ENCODE measurements at regions of chr10 and their contacts with region 1.

Region 1: DNA sequence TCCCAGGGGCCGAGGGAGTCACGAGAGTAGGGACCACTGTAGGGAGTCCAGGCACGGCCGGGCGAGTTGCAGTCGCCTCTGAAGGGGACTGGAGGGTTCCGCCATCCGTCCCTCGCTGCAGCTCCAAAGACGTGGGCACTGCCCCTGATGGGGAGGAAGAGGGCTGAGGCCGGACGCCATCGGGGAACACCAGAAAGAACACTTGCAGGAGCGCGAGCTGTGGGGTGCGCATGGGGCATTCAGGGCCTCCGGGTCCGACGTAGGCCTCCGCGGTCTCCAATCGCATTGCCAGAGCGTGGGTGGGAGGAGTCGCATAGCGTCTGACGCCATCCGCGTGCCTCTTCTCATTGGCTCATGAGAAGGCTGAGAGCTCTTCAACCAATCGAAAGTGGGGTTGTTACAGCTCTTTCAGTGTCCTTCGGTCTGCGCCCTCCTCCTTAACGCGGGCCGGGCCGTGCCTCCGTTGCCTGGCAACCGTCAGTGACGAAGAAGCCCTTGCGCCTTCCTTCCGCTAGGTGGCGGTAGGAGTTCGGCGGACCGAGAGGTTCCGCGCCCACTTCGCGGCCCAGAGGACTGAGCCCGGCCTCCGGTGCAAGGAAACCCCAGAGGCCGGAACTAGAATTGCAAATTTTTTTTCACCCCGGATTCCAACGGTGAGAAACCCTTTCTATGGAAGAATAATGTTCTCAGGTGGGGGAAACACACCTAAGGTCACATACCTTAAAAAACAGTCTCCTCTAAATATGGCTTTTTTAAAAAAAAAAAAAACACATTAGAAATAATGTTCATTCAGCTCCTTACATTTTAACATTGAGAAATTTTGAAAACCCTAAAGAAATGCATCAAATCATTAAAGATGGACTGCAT is at the start of gene TCTN3:
- DNase-seq: peak; percentile 97
- ATAC-seq: peak; percentile 100
- H3K4me3 Mint-ChIP-seq: peak within 1 kb of the TSS; percentile 99
- H3K27ac Mint-ChIP-seq: peak within 1 kb of the TSS; percentile 97
- H3K4me1 Mint-ChIP-seq: peaks cover 17% of the 10 kb centered on the region
- H3K27me3 Mint-ChIP-seq: peaks cover 7% of the 10 kb centered on the region
- CTCF ChIP-seq: peak; percentile 99
- total RNA-seq, gene TCTN3: 26.4 to 33.5 TPM (median 29.3 TPM) in 3 replicates

Region 2: GRCh38 chr10:95478935-95479334 is 215.0 kb before region 1 on chr10:
- CTCF ChIA-PET with region 1: interaction called, 11 read pairs
- POLR2A ChIA-PET with region 1: no interaction called
- DNase-seq: no peak
- ATAC-seq: no peak
- H3K4me3 Mint-ChIP-seq: no peak overlapping the region
- H3K27ac Mint-ChIP-seq: no peak overlapping the region
- H3K4me1 Mint-ChIP-seq: peaks cover 69% of the 10 kb centered on the region
- H3K27me3 Mint-ChIP-seq: no peaks in the 10 kb centered on the region
- CTCF ChIP-seq: no peak

Region 3: DNA sequence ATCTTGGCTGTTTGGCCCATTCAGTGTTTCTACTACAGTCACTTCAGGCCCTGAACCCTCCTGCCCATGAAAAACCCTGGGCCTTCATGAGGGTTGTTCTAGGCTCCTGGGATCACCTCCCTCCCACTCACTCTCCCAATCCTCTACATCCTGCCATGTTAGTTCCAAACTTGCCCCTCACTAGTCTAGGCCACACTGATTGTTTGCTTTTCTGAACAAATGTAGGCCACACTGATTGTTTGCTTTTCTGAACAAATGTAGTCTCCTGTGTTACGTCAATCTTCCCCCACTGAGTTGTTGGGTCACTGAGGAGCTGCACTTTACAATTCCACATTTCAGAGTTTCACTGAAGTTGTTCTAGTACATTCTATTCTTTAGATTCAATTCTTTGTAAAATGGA is 32.1 kb before region 1 on chr10:
- CTCF ChIA-PET with region 1: interaction called, 24 read pairs
- POLR2A ChIA-PET with region 1: no interaction called
- DNase-seq: no peak
- ATAC-seq: no peak
- H3K4me3 Mint-ChIP-seq: no peak overlapping the region
- H3K27ac Mint-ChIP-seq: peak overlapping the region; percentile 79
- H3K4me1 Mint-ChIP-seq: no peaks in the 10 kb centered on the region
- H3K27me3 Mint-ChIP-seq: peaks cover 3% of the 10 kb centered on the region
- CTCF ChIP-seq: no peak

Region 4: GRCh38 chr10:95716466-95717224 is 22.7 kb after region 1 on chr10:
- CTCF ChIA-PET with region 1: interaction called, 33 read pairs
- POLR2A ChIA-PET with region 1: no interaction called
- DNase-seq: no peak
- ATAC-seq: no peak
- H3K4me3 Mint-ChIP-seq: no peak overlapping the region
- H3K27ac Mint-ChIP-seq: no peak overlapping the region
- H3K4me1 Mint-ChIP-seq: peaks cover 10% of the 10 kb centered on the region; the same call in 1 of the 2 replicates
- H3K27me3 Mint-ChIP-seq: no peaks in the 10 kb centered on the region
- CTCF ChIP-seq: no peak

Region 5: DNA sequence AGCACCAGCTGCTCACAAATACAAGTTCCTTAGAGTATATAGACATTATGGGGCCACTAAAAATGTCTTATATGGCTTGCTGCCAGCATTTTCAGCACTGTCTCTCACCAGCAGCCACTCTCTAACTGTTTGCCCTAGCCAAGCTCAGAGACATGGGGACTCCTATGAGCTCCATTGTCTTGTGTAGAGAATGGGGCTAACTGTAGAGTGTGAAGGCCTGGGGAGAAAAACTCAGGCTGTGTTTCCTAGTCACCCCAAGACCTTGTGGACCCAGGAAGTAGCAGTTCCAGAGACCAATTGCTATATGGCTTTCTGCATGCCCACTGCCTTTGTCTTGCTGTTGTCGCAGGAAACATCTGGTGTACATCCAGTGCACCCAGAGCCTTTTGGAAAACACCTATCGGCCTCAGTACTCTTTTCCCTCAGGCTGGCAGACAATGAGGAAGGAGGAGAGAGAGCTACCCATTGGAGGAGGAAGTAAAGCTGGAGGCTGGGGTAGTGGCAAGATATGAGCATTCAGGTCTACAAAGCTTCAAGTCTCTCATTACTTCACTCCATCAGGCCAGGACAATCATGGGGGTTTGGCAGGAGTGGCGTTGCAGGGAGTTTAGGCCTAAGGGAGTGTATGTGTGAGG is 90.5 kb after region 1 on chr10:
- CTCF ChIA-PET with region 1: interaction called, 23 read pairs
- POLR2A ChIA-PET with region 1: no interaction called
- DNase-seq: no peak
- ATAC-seq: no peak
- H3K4me3 Mint-ChIP-seq: no peak overlapping the region
- H3K27ac Mint-ChIP-seq: no peak overlapping the region
- H3K4me1 Mint-ChIP-seq: no peaks in the 10 kb centered on the region
- H3K27me3 Mint-ChIP-seq: peaks cover 3% of the 10 kb centered on the region; the same call in 1 of the 2 replicates
- CTCF ChIP-seq: no peak

Region 6: DNA sequence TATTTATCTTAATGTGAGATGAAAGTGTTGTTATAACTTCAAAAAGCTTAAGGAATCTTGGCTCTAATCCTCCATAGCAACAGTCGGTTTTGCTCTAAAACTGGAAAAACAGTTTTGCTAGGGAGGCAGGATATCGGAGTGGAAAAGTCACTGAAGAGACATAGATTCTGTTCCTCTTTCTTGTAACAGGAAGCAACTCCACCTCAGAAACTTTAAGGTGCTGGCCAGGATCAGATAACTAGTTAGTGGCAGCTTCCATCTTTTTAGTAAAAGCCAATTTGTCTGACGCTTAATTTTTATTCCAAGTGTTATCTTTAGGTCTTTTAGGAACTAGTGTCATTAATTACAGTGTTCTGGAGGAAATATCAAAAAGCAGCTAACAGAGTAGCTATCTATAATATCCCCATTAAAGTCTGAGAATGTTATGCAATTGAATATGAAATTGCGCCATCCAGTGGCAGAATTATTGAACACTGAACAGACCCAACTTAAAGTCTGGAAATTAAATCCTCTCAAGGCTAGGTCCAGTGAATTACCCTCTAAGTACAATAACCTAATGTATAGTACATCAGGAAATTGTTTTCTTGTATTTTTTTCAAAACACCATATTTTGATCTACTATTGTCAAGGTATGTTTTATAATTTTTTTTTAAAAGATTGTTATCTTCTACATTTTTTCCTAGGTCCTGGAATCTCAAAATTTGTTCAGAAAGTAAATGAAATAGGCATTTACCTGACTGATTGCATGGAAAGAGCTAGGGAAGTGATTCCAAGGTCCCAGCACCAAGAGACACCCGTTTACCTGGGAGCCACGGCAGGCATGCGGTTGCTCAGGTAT is 148.0 kb after region 1 on chr10:
- CTCF ChIA-PET with region 1: interaction called, 221 read pairs
- POLR2A ChIA-PET with region 1: interaction called, 7 read pairs
- DNase-seq: peak; percentile 23
- ATAC-seq: peak; percentile 51; the same call in 1 of the 2 replicates
- H3K4me3 Mint-ChIP-seq: no peak overlapping the region
- H3K27ac Mint-ChIP-seq: no peak overlapping the region
- H3K4me1 Mint-ChIP-seq: peaks cover 8% of the 10 kb centered on the region
- H3K27me3 Mint-ChIP-seq: no peaks in the 10 kb centered on the region
- CTCF ChIP-seq: peak; percentile 68

Region 7: DNA sequence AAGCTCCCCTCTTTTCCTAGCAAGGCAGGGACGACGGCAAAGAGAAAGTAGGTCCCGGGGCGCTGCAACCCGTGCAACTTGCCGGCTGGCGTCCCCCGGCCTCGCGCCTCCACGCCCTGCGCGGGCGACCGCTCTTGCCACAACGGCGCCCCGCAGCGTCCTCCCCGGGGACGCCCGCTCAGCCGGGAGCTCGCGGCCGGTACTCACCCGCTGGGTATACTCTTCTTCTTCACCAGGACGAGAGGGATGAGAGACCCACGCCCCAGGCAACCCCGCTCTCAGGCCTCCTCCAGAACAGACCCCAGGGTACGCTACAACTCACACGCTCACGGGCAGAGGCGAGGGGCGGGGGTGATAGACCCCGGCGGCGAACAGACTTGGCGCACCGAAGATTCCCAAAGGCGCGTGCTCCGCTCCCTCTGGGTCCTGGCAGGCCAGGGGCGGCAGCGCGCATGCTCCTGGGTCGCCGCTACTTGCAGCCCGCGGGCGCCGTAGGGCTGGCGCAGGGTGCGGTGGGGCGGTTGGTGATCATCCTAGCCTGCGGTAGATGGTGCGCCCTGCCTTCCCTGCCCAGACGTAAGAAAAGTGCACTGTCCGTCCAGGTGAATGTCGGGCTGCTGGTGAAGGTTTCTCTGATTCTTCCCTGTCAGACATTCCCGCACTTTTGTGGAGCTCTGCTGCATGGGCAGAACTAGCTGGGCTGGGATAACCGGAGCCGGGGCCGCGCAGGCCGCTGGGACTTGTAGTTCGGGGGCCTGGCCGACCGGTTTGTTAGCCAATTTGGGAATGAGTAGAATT is 213.8 kb after region 1 on chr10 and contains the start of gene CC2D2B:
- CTCF ChIA-PET with region 1: interaction called, 17 read pairs
- POLR2A ChIA-PET with region 1: no interaction called
- DNase-seq: peak; percentile 85
- ATAC-seq: peak; percentile 96
- H3K4me3 Mint-ChIP-seq: peak within 1 kb of the TSS; percentile 88
- H3K27ac Mint-ChIP-seq: peak within 1 kb of the TSS; percentile 76; the same call in 1 of the 2 replicates
- H3K4me1 Mint-ChIP-seq: peaks cover 8% of the 10 kb centered on the region
- H3K27me3 Mint-ChIP-seq: peaks cover 3% of the 10 kb centered on the region; the same call in 1 of the 2 replicates
- CTCF ChIP-seq: no peak
- total RNA-seq, gene CC2D2B: 0.20 to 0.32 TPM (median 0.25 TPM) in 3 replicates